CD14-positive monocyte (primary cell): ENCODE measurements at regions of chr9 and their contacts with region 1.

Region 1: GRCh38 chr9:76658535-76659231 is 105.6 kb upstream of the PCA3 start:
- DNase-seq: peak; percentile 32 to 63 (median 49)
- H3K4me3 ChIP-seq: no peak overlapping the region
- H3K4me3 Mint-ChIP-seq: peak overlapping the region in 1 of 2 donors; percentile 46
- H3K27ac ChIP-seq: no peak overlapping the region
- H3K27ac Mint-ChIP-seq: no peak overlapping the region
- H3K4me1 ChIP-seq: peaks cover 26 to 42% of the 10 kb centered on the region in 2 donors
- H3K4me1 Mint-ChIP-seq: peaks cover 44% of the 10 kb centered on the region
- H3K27me3 ChIP-seq: no peaks in the 10 kb centered on the region
- H3K27me3 Mint-ChIP-seq: peaks cover 0 to 1% (median 0%) of the 10 kb centered on the region in 3 donors
- CTCF ChIP-seq: peak; percentile 81

Region 2: DNA sequence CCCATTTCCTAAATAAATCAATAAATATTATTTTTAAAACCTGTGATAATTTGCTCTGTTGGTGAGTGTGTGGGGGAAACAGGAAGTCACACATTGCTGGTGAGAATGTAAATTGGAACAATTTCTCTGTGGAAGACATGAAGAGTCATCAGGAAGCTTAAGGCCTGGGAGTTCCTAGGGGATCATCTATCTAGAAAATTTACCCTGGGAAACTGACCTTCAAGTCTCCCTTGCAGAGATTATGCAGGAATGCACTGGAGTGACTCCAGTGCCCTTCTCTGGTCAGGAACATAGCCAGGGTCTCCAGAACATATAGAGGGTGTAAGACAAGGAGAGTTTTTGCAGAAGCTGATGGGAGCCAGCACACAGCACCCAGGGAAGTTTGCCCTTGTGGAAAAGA is 212.7 kb before region 1 on chr9:
- intact Hi-C with region 1: loop called (anchors 1 to 5 kb)
- DNase-seq: no peak
- H3K4me3 ChIP-seq: no peak overlapping the region
- H3K4me3 Mint-ChIP-seq: no peak overlapping the region
- H3K27ac ChIP-seq: no peak overlapping the region
- H3K27ac Mint-ChIP-seq: peak overlapping the region in 1 of 7 donors; percentile 54
- H3K4me1 ChIP-seq: peaks cover 0 to 3% of the 10 kb centered on the region in 2 donors
- H3K4me1 Mint-ChIP-seq: peaks cover 12% of the 10 kb centered on the region
- H3K27me3 ChIP-seq: no peaks in the 10 kb centered on the region
- H3K27me3 Mint-ChIP-seq: no peaks in the 10 kb centered on the region
- CTCF ChIP-seq: no peak

Region 3: GRCh38 chr9:76451234-76451633 is 207.4 kb before region 1 on chr9:
- intact Hi-C with region 1: loop called (anchors 1 to 5 kb)
- DNase-seq: no peak
- H3K4me3 ChIP-seq: no peak overlapping the region
- H3K4me3 Mint-ChIP-seq: no peak overlapping the region
- H3K27ac ChIP-seq: no peak overlapping the region
- H3K27ac Mint-ChIP-seq: no peak overlapping the region
- H3K4me1 ChIP-seq: peaks cover 12 to 19% of the 10 kb centered on the region in 2 donors
- H3K4me1 Mint-ChIP-seq: peaks cover 29% of the 10 kb centered on the region
- H3K27me3 ChIP-seq: no peaks in the 10 kb centered on the region
- H3K27me3 Mint-ChIP-seq: peaks cover 0 to 1% (median 0%) of the 10 kb centered on the region in 3 donors
- CTCF ChIP-seq: no peak

Region 4: GRCh38 chr9:76605321-76605900 is 53.3 kb before region 1 on chr9:
- intact Hi-C with region 1: loop called in 1 of 2 experiments (anchors 10 kb)
- DNase-seq: peak in 2 of 3 donors; percentile 44 to 47
- H3K4me3 ChIP-seq: no peak overlapping the region
- H3K4me3 Mint-ChIP-seq: no peak overlapping the region
- H3K27ac ChIP-seq: peak overlapping the region in 1 of 2 donors; percentile 10
- H3K27ac Mint-ChIP-seq: peak overlapping the region in 5 of 7 donors; percentile 9 to 86 (median 58)
- H3K4me1 ChIP-seq: peaks cover 57 to 68% of the 10 kb centered on the region in 2 donors
- H3K4me1 Mint-ChIP-seq: peaks cover 55% of the 10 kb centered on the region
- H3K27me3 ChIP-seq: no peaks in the 10 kb centered on the region
- H3K27me3 Mint-ChIP-seq: no peaks in the 10 kb centered on the region
- CTCF ChIP-seq: no peak

Region 5: GRCh38 chr9:76704593-76705204 is 46.0 kb after region 1 on chr9:
- intact Hi-C with region 1: loop called in 1 of 2 experiments (anchors 5 kb)
- DNase-seq: peak; percentile 55 to 72 (median 66)
- H3K4me3 ChIP-seq: no peak overlapping the region
- H3K4me3 Mint-ChIP-seq: peak overlapping the region in 1 of 2 donors; percentile 32
- H3K27ac ChIP-seq: no peak overlapping the region
- H3K27ac Mint-ChIP-seq: peak overlapping the region in 1 of 7 donors; percentile 28
- H3K4me1 ChIP-seq: no peaks in the 10 kb centered on the region
- H3K4me1 Mint-ChIP-seq: peaks cover 31% of the 10 kb centered on the region
- H3K27me3 ChIP-seq: no peaks in the 10 kb centered on the region
- H3K27me3 Mint-ChIP-seq: peaks cover 2 to 19% (median 3%) of the 10 kb centered on the region in 3 donors
- CTCF ChIP-seq: peak; percentile 87

Region 6: GRCh38 chr9:76744336-76744735 is 85.7 kb after region 1 on chr9:
- intact Hi-C with region 1: no loop called
- DNase-seq: no peak
- H3K4me3 ChIP-seq: no peak overlapping the region
- H3K4me3 Mint-ChIP-seq: no peak overlapping the region
- H3K27ac ChIP-seq: no peak overlapping the region
- H3K27ac Mint-ChIP-seq: no peak overlapping the region
- H3K4me1 ChIP-seq: no peaks in the 10 kb centered on the region
- H3K4me1 Mint-ChIP-seq: no peaks in the 10 kb centered on the region
- H3K27me3 ChIP-seq: no peaks in the 10 kb centered on the region
- H3K27me3 Mint-ChIP-seq: peaks cover 2 to 4% (median 3%) of the 10 kb centered on the region in 3 donors
- CTCF ChIP-seq: no peak